SK-N-SH (cell line): ENCODE measurements at regions of chr6 and their contacts with region 1.

Region 1: DNA sequence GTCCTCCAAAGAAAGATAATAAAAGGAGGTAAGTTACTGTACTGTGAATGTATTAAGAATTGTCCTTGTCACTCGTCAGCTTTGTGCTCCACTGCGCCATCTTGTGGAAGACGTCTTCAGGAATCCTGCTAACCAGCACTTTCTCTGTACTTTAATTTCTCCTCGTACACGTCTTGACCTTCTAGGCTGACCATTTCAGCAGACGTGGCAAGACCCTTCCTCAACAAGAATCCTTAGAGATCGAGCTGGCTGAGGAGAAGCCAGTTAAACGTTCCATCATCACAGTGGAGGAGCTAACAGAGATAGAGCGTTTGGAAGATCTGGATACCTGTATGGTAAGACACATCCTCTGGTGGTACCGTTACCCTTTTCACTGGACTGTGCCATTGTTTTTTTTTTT is 95.5 kb upstream of the SCGN start:
- DNase-seq: peak; percentile 36
- H3K4me3 ChIP-seq: no peak overlapping the region; a peak in 1 of 4 replicates
- H3K27ac ChIP-seq: no peak overlapping the region
- H3K4me1 ChIP-seq: peaks cover 0 to 6% of the 10 kb centered on the region in 2 experiments; a peak in 2 of 4 replicates
- H3K27me3 ChIP-seq: no peaks in the 10 kb centered on the region
- CTCF ChIP-seq: peak; percentile 95
- EP300 ChIP-seq: no peak
- RAD21 ChIP-seq: peak; percentile 77

Region 2: GRCh38 chr6:25270559-25270958 is 286.0 kb before region 1 on chr6:
- CTCF ChIA-PET with region 1: interaction called, 66 read pairs
- POLR2A ChIA-PET with region 1: no interaction called
- DNase-seq: no peak
- H3K4me3 ChIP-seq: no peak overlapping the region
- H3K27ac ChIP-seq: no peak overlapping the region
- H3K4me1 ChIP-seq: no peaks in the 10 kb centered on the region
- H3K27me3 ChIP-seq: no peaks in the 10 kb centered on the region
- CTCF ChIP-seq: no peak
- EP300 ChIP-seq: no peak
- RAD21 ChIP-seq: no peak

Region 3: GRCh38 chr6:25490018-25490801 is 66.3 kb before region 1 on chr6:
- CTCF ChIA-PET with region 1: interaction called, 31 read pairs
- POLR2A ChIA-PET with region 1: no interaction called
- DNase-seq: peak; percentile 48
- H3K4me3 ChIP-seq: peak overlapping the region in 1 of 2 experiments; percentile 16; a peak in 1 of 4 replicates
- H3K27ac ChIP-seq: no peak overlapping the region; a peak in 1 of 4 replicates
- H3K4me1 ChIP-seq: peaks cover 0 to 11% of the 10 kb centered on the region in 2 experiments; a peak in 2 of 4 replicates
- H3K27me3 ChIP-seq: no peaks in the 10 kb centered on the region
- CTCF ChIP-seq: peak; percentile 86
- EP300 ChIP-seq: no peak
- RAD21 ChIP-seq: peak; percentile 93

Region 4: DNA sequence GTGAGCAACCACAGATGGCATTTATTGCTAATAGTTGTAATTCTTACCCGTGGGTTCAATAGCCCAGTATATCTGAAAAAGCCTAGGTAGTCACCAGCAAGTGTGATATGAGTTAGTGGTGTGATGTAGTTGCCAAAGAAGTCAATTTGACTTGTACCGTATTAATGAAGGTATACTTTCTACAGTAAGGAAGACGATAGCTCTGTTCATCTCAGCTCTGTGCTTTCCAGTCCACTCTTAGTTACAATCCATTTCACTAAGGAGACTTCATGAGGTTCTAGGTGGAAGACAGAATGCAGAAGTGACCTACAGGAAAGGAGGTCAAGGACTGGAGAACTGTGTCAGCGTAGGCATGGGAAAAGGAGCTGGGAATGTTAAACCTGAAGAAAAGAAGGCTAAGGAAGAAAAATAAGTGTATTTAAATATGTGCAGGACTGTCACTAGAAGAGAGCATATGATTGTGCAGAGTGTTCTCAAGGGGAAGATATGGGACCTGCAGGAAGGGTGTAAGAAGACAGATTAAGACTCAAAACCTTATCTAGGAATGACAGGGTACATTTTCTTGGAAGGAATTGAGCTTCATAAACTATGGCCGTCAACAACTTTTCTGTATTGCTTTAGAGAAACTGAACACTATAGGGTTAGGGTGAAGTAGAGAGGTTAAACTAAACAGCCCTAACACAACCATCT is 21.4 kb before region 1 on chr6:
- CTCF ChIA-PET with region 1: interaction called, 20 read pairs
- POLR2A ChIA-PET with region 1: no interaction called
- DNase-seq: no peak
- H3K4me3 ChIP-seq: no peak overlapping the region
- H3K27ac ChIP-seq: no peak overlapping the region
- H3K4me1 ChIP-seq: no peaks in the 10 kb centered on the region
- H3K27me3 ChIP-seq: no peaks in the 10 kb centered on the region
- CTCF ChIP-seq: no peak
- EP300 ChIP-seq: no peak
- RAD21 ChIP-seq: no peak

Region 5: GRCh38 chr6:25590986-25591385 is 34.5 kb after region 1 on chr6:
- CTCF ChIA-PET with region 1: interaction called, 23 read pairs
- POLR2A ChIA-PET with region 1: no interaction called
- DNase-seq: peak; percentile 25
- H3K4me3 ChIP-seq: no peak overlapping the region
- H3K27ac ChIP-seq: peak overlapping the region in 1 of 2 experiments; percentile 60; a peak in 2 of 4 replicates
- H3K4me1 ChIP-seq: peaks cover 0 to 10% of the 10 kb centered on the region in 2 experiments; a peak in 2 of 4 replicates
- H3K27me3 ChIP-seq: no peaks in the 10 kb centered on the region
- CTCF ChIP-seq: no peak
- EP300 ChIP-seq: no peak
- RAD21 ChIP-seq: no peak